WTC11 (cell line): ENCODE measurements at regions of chr3 and their contacts with region 1.

Region 1: DNA sequence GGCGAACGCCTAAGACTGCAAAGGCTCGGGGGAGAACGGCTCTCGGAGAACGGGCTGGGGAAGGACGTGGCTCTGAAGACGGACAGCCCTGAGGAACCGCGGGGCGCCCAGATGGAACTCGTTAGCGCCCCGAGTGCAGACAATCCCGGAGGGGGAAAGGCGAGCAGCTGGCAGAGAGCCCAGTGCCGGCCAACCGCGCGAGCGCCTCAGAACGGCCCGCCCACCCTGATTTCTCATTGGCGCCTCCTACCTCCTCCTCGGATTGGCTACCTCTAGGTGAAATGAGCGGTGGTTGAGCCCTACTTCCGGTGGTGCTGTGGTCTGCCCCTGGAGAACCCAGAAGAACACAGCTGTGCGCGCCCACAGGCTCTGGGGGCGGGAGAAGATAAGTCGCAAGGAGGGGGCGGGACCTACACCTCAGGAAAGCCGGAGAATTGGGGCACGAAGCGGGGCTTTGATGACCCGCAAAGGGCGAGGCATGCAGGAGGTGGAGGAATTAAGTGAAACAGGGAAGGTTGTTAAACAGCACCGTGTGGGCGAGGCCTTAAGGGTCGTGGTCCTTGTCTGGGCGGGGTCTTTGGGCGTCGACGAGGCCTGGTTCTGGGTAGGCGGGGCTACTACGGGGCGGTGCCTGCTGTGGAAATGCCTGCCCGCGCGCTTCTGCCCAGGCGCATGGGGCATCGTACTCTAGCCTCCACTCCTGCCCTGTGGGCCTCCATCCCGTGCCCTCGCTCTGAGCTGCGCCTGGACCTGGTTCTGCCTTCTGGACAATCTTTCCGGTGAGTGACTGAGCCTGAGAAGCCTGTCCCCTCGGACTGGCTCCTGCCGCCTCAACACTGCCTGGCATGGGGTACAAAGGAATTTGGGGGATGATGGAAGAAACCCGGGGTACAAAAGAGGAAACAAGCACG is at the start of gene OGG1:
- DNase-seq: peak; percentile 96
- ATAC-seq: peak; percentile 96
- H3K4me3 Mint-ChIP-seq: peak within 1 kb of the TSS; percentile 98
- H3K27ac Mint-ChIP-seq: peak within 1 kb of the TSS; percentile 99
- H3K4me1 Mint-ChIP-seq: peaks cover 11% of the 10 kb centered on the region
- H3K27me3 Mint-ChIP-seq: no peaks in the 10 kb centered on the region
- CTCF ChIP-seq: no peak
- total RNA-seq, gene OGG1: 23.6 to 27.3 TPM (median 26.7 TPM) in 3 replicates

Region 2: GRCh38 chr3:9792405-9793160 is 42.7 kb after region 1 on chr3 and contains the starts of genes ARPC4 and TADA3:
- CTCF ChIA-PET with region 1: interaction called, 4 read pairs
- POLR2A ChIA-PET with region 1: interaction called, 11 read pairs
- DNase-seq: peak; percentile 89
- ATAC-seq: peak; percentile 90
- H3K4me3 Mint-ChIP-seq: peak within 1 kb of the TSS; percentile 94
- H3K27ac Mint-ChIP-seq: peak within 1 kb of the TSS; percentile 100
- H3K4me1 Mint-ChIP-seq: peaks cover 18% of the 10 kb centered on the region
- H3K27me3 Mint-ChIP-seq: no peaks in the 10 kb centered on the region; the same call in 1 of the 2 replicates
- CTCF ChIP-seq: no peak
- total RNA-seq, gene ARPC4: 127 to 143 TPM (median 133 TPM) in 3 replicates
- total RNA-seq, gene TADA3: 49.0 to 57.9 TPM (median 55.9 TPM) in 3 replicates

Region 3: GRCh38 chr3:9902372-9903237 is 152.7 kb after region 1 on chr3 and contains the start of gene IL17RE:
- CTCF ChIA-PET with region 1: no interaction called
- POLR2A ChIA-PET with region 1: no interaction called
- DNase-seq: peak; percentile 50
- ATAC-seq: peak; percentile 89
- H3K4me3 Mint-ChIP-seq: peak within 1 kb of the TSS; percentile 40
- H3K27ac Mint-ChIP-seq: no peak within 1 kb of the TSS
- H3K4me1 Mint-ChIP-seq: peaks cover 19% of the 10 kb centered on the region
- H3K27me3 Mint-ChIP-seq: no peaks in the 10 kb centered on the region; the same call in 1 of the 2 replicates
- CTCF ChIP-seq: no peak
- total RNA-seq, gene IL17RE: 3.0 to 4.2 TPM (median 4.0 TPM) in 3 replicates